PC-3 (cell line): ENCODE measurements at regions of chr11 and their contacts with region 1.

Region 1: GRCh38 chr11:62905927-62906531 is 15.1 kb downstream of the CHRM1 start:
- DNase-seq: peak; percentile 98
- ATAC-seq: peak; percentile 90
- H3K4me3 ChIP-seq: no peak overlapping the region
- H3K27ac ChIP-seq: no peak overlapping the region
- H3K4me1 ChIP-seq: peaks cover 9% of the 10 kb centered on the region
- H3K27me3 ChIP-seq: no peaks in the 10 kb centered on the region
- CTCF ChIP-seq: peak; percentile 99

Region 2: DNA sequence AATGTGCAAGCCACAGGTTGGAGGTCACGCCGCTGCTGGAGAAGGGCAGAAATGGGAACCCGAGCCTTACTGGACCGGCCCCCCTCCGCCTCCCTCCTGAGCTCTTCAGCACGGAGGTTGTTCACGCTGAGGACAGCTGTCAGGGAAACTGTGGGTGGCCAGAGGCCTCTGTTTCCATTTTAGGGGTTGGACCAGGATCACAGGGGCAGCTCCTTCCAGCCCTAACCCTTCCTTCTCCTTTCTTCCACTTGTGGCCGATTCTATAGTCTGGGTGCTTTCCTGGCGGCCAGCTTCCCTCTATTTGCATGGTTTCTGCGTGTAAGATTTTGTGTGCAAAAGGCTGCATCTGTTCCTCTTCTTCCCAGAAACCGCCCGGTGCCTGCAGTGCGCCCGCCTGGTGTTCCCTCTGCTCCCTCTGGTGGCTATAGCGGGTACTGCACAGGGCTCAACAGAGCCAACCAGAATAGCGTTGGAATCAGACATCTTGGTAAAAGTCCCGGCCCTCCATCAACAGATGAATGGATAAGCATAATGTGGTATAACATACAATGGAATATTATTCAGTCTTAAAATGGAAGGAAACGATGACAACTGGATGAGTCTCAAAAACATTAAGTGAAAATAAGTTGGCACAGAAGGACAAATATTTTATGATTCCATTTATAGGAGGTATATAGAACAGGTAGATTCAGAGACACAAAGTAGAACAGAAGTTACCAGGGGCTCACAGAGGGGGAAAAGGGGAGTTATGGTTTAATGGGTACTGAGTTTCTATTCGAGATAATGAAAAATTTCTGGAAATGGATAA is 118.0 kb after region 1 on chr11:
- CTCF ChIA-PET with region 1: interaction called, 24 read pairs
- POLR2A ChIA-PET with region 1: no interaction called
- intact Hi-C with region 1: loop called (anchors 1 kb)
- DNase-seq: peak; percentile 93
- ATAC-seq: peak; percentile 98
- H3K4me3 ChIP-seq: no peak overlapping the region
- H3K27ac ChIP-seq: no peak overlapping the region
- H3K4me1 ChIP-seq: no peaks in the 10 kb centered on the region
- H3K27me3 ChIP-seq: peaks cover 5% of the 10 kb centered on the region; the same call in 1 of the 2 replicates
- CTCF ChIP-seq: peak; percentile 100